Dendritic cell treated with granulocyte-macrophage colony-stimulating factor and Interleukin-4, amounts not matched to agents 40 ng/mL and 50 ng/mL, for 4 days (primary cell): ENCODE measurements at regions of chr10 and their contacts with region 1.

Region 1: GRCh38 chr10:102132563-102133372 is at the start of gene PPRC1:
- H3K4me3 Mint-ChIP-seq: peak within 1 kb of the TSS; percentile 94
- H3K27ac Mint-ChIP-seq: peak within 1 kb of the TSS; percentile 99
- H3K4me1 Mint-ChIP-seq: peaks cover 29% of the 10 kb centered on the region
- H3K27me3 Mint-ChIP-seq: no peaks in the 10 kb centered on the region

Region 2: GRCh38 chr10:102055647-102056419 is 76.9 kb before region 1 on chr10 and contains the start of gene ARMH3:
- intact Hi-C with region 1: loop called (anchors 5 kb)
- H3K4me3 Mint-ChIP-seq: peak within 1 kb of the TSS; percentile 93
- H3K27ac Mint-ChIP-seq: peak within 1 kb of the TSS; percentile 98
- H3K4me1 Mint-ChIP-seq: peaks cover 31% of the 10 kb centered on the region
- H3K27me3 Mint-ChIP-seq: no peaks in the 10 kb centered on the region

Region 3: DNA sequence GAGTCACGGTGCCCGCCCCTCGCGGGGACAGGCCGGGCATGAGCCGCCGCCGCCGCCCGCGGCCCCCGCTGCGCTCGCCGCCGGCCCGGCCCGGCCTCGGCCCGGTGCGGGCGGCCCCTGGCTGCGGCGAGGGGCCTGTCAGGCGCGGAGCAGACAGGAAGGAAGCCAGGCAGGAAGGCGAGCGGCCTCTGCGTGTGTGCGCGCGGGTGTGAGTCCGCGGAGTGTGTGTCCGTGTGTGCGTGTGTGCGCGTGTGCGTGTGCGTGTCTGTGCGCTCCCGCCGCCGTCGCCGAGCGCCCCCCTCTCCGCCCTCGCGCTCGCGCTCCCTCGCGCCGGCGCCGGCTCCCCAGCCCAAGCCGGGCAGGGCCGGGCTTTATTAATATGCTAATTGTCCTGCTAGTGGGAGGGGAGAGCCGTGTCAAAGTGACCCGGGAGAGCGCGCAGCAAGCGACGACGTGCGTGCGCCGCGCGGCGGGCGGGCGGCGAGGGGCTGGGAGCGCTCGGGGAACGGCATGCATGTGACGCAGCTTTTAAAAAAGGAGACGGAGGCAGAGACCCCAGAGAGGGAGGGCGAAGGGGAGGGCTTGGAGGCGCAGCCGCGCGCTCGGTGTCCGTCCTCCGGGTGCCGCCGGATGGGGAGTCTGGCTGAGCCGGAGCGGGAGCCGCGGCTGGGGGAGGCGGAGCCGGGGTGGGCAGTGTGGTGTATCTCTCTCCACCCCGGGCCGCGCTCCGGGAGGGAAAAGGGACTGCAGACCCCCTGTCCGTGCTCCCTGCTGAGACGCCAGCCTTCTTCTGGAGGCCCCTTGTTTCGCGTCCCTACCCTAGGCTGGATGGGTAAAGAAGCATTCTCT is 12.4 kb before region 1 on chr10 and contains the start of gene LDB1:
- intact Hi-C with region 1: loop called (anchors 1 kb)
- H3K4me3 Mint-ChIP-seq: peak within 1 kb of the TSS; percentile 96
- H3K27ac Mint-ChIP-seq: peak within 1 kb of the TSS; percentile 91
- H3K4me1 Mint-ChIP-seq: peaks cover 61% of the 10 kb centered on the region
- H3K27me3 Mint-ChIP-seq: no peaks in the 10 kb centered on the region

Region 4: DNA sequence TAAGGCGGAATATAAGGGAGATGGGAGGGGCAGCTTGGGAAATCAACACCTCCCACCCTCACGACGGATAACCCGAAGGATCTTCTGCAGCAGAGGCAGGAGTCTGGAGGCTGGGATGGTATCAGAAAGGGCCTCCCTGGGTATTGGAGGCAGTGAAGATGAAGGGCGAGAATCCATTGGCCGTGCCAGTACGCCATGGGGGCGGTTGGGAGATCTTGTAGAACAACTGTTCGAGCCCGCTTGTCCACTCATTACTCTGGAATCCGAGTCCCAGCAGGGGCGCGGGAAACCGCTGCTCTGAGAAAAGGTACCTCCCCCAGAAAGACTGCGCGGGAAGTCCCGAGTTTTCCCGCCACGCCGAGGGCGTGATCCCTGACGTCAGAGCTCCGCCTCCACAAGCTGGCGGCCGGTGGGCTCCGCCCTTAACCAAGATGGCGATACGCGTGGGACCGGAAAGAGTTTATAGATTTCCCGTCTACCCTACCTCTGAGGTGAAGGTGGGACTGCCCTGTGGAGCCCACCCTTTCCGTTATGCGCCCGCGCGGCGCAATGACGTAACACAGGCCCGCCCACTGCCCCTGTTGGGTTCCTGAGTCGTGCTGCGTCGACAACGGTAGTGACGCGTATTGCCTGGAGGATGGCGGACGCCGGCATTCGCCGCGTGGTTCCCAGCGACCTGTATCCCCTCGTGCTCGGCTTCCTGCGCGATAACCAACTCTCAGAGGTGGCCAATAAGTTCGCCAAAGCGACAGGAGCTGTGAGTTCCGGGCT is 19.2 kb after region 1 on chr10 and contains the start of gene NOLC1:
- intact Hi-C with region 1: loop called (anchors 1 kb)
- H3K4me3 Mint-ChIP-seq: peak within 1 kb of the TSS; percentile 91
- H3K27ac Mint-ChIP-seq: peak within 1 kb of the TSS; percentile 91
- H3K4me1 Mint-ChIP-seq: peaks cover 30% of the 10 kb centered on the region
- H3K27me3 Mint-ChIP-seq: no peaks in the 10 kb centered on the region

Region 5: GRCh38 chr10:102254426-102254825 is 121.7 kb after region 1 on chr10:
- intact Hi-C with region 1: no loop called
- H3K4me3 Mint-ChIP-seq: no peak overlapping the region
- H3K27ac Mint-ChIP-seq: no peak overlapping the region
- H3K4me1 Mint-ChIP-seq: no peaks in the 10 kb centered on the region
- H3K27me3 Mint-ChIP-seq: no peaks in the 10 kb centered on the region